ENCODE measurements at regions of chr4 and their contacts with region 1.

Region 1: GRCh38 chr4:73258686-73259570 is at the start of gene ANKRD17:
- DNase-seq: peak; percentile 92 to 95 (median 94)
- ATAC-seq: peak; percentile 91 to 94 (median 92)
- H3K4me3 ChIP-seq: peak within 1 kb of the TSS; percentile 68 to 94 (median 84)
- H3K27ac ChIP-seq: peak within 1 kb of the TSS; percentile 86 to 99 (median 98)
- H3K4me1 ChIP-seq: peaks cover 3 to 58% (median 47%) of the 10 kb centered on the region in 12 donors
- H3K27me3 ChIP-seq: no peaks in the 10 kb centered on the region
- CTCF ChIP-seq: peak in 3 of 12 donors; percentile 15 to 23 (median 17)
- POLR2A ChIP-seq: peak in 1 of 2 donors; percentile 52
- total RNA-seq, gene ANKRD17: 48.5 to 67.1 (median 58.9) TPM

Region 2: GRCh38 chr4:73069338-73070073 is 189.4 kb before region 1 on chr4 and contains the start of gene COX18:
- intact Hi-C with region 1: loop called (anchors 1 to 5 kb)
- DNase-seq: peak; percentile 97 to 99 (median 99)
- ATAC-seq: peak; percentile 96 to 99 (median 97)
- H3K4me3 ChIP-seq: peak within 1 kb of the TSS; percentile 69 to 96 (median 82)
- H3K27ac ChIP-seq: peak within 1 kb of the TSS; percentile 88 to 99 (median 97)
- H3K4me1 ChIP-seq: peaks cover 0 to 24% (median 15%) of the 10 kb centered on the region in 12 donors
- H3K27me3 ChIP-seq: no peaks in the 10 kb centered on the region
- CTCF ChIP-seq: peak in 3 of 12 donors; percentile 6 to 12 (median 11)
- POLR2A ChIP-seq: peak in 1 of 2 donors; percentile 91
- total RNA-seq, gene COX18: 14.0 to 32.2 (median 17.9) TPM

Region 3: GRCh38 chr4:73127839-73128453 is 131.0 kb before region 1 on chr4:
- intact Hi-C with region 1: loop called in 6 of 10 experiments (anchors 5 to 10 kb)
- DNase-seq: no peak
- ATAC-seq: peak in 3 of 4 donors; percentile 67 to 70 (median 69)
- H3K4me3 ChIP-seq: no peak overlapping the region
- H3K27ac ChIP-seq: no peak overlapping the region
- H3K4me1 ChIP-seq: no peaks in the 10 kb centered on the region
- H3K27me3 ChIP-seq: no peaks in the 10 kb centered on the region
- CTCF ChIP-seq: peak in 7 of 12 donors; percentile 18 to 48 (median 29)
- POLR2A ChIP-seq: no peak

Region 4: GRCh38 chr4:73142995-73143547 is 115.9 kb before region 1 on chr4:
- intact Hi-C with region 1: loop called in 6 of 10 experiments (anchors 5 to 10 kb)
- DNase-seq: no peak
- ATAC-seq: no peak
- H3K4me3 ChIP-seq: no peak overlapping the region
- H3K27ac ChIP-seq: no peak overlapping the region
- H3K4me1 ChIP-seq: peaks cover 0 to 6% (median 0%) of the 10 kb centered on the region in 12 donors
- H3K27me3 ChIP-seq: no peaks in the 10 kb centered on the region
- CTCF ChIP-seq: peak in 8 of 12 donors; percentile 7 to 41 (median 16)
- POLR2A ChIP-seq: no peak

Region 5: DNA sequence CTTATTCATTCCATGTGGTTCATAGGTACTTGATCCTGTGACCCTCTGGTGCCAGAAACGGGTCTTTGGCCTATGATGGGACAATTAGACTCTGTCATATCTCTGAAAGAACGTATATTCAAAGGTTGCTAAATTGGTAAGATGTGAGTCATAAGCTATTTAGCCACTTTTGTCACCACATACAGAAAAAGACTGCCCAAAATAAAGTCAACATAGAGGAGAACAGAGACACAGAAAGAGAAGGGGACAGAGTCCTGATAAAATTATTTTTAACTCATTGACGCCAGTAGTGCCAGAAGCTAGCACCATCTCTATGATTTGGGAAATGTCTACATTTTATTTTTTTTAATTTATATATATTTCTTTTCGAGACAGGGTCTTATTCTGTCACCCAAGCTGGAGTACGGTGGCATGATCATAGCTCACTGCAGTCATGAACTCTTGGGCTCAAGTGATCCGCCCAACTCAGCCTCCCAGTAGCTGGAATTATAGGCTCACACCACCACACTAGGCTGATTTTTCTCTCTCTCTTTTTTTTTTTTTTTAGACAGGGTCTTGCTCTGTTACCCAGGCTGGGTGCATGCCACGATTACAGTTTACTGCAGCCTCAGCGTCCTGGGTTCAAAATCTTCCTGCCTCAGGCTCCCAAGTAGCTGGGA is 97.3 kb before region 1 on chr4:
- intact Hi-C with region 1: loop called in 1 of 10 experiments (anchors 10 kb)
- DNase-seq: no peak
- ATAC-seq: peak in 3 of 4 donors; percentile 59 to 71 (median 64)
- H3K4me3 ChIP-seq: no peak overlapping the region
- H3K27ac ChIP-seq: peak overlapping the region in 4 of 12 donors; percentile 2 to 39 (median 28)
- H3K4me1 ChIP-seq: peaks cover 0 to 10% (median 0%) of the 10 kb centered on the region in 12 donors
- H3K27me3 ChIP-seq: no peaks in the 10 kb centered on the region
- CTCF ChIP-seq: no peak
- POLR2A ChIP-seq: no peak

Region 6: GRCh38 chr4:73222466-73223257 is 36.3 kb before region 1 on chr4:
- intact Hi-C with region 1: loop called in 4 of 10 experiments (anchors 2 to 5 kb)
- DNase-seq: peak in 4 of 5 donors; percentile 51 to 76 (median 62)
- ATAC-seq: peak; percentile 99 to 100 (median 100)
- H3K4me3 ChIP-seq: peak overlapping the region; percentile 33 to 68 (median 56)
- H3K27ac ChIP-seq: peak overlapping the region; percentile 43 to 91 (median 81)
- H3K4me1 ChIP-seq: peaks cover 0 to 58% (median 31%) of the 10 kb centered on the region in 12 donors
- H3K27me3 ChIP-seq: no peaks in the 10 kb centered on the region
- CTCF ChIP-seq: no peak
- POLR2A ChIP-seq: no peak

Measured in heart left ventricle (tissue), 16 donors.